Activated T-helper 2 cell treated with anti-CD3 and anti-CD28 coated beads, Interferon-gamma antibody, Interleukin-2, Interleukin-4, amounts not matched to agents 10 μg/mL and 5 μg/mL and 100 μg/mL, durations not matched to agents 14 hours and 24 hours and 36 hours (primary cell): ENCODE measurements at regions of chr5 and their contacts with region 1.

Region 1: GRCh38 chr5:134648425-134649162 is at the start of gene SEC24A:
- DNase-seq: peak; percentile 88
- H3K4me3 Mint-ChIP-seq: peak within 1 kb of the TSS; percentile 88
- H3K27ac Mint-ChIP-seq: peak within 1 kb of the TSS; percentile 97
- H3K4me1 Mint-ChIP-seq: peaks cover 22% of the 10 kb centered on the region
- H3K27me3 Mint-ChIP-seq: no peaks in the 10 kb centered on the region
- total RNA-seq, gene SEC24A: 33.9 and 34.0 TPM in 2 replicates

Region 2: GRCh38 chr5:134004592-134005375 is 643.8 kb before region 1 on chr5 and contains the start of gene VDAC1:
- intact Hi-C with region 1: loop called (anchors 10 kb)
- DNase-seq: peak; percentile 81
- H3K4me3 Mint-ChIP-seq: peak within 1 kb of the TSS; percentile 92
- H3K27ac Mint-ChIP-seq: peak within 1 kb of the TSS; percentile 97
- H3K4me1 Mint-ChIP-seq: peaks cover 40% of the 10 kb centered on the region
- H3K27me3 Mint-ChIP-seq: no peaks in the 10 kb centered on the region
- total RNA-seq, gene VDAC1: 455 and 459 TPM in 2 replicates

Region 3: GRCh38 chr5:134603059-134603458 is 45.5 kb before region 1 on chr5:
- intact Hi-C with region 1: loop called (anchors 1 kb)
- DNase-seq: no peak
- H3K4me3 Mint-ChIP-seq: no peak overlapping the region
- H3K27ac Mint-ChIP-seq: peak overlapping the region; percentile 52
- H3K4me1 Mint-ChIP-seq: peaks cover 40% of the 10 kb centered on the region
- H3K27me3 Mint-ChIP-seq: no peaks in the 10 kb centered on the region

Region 4: DNA sequence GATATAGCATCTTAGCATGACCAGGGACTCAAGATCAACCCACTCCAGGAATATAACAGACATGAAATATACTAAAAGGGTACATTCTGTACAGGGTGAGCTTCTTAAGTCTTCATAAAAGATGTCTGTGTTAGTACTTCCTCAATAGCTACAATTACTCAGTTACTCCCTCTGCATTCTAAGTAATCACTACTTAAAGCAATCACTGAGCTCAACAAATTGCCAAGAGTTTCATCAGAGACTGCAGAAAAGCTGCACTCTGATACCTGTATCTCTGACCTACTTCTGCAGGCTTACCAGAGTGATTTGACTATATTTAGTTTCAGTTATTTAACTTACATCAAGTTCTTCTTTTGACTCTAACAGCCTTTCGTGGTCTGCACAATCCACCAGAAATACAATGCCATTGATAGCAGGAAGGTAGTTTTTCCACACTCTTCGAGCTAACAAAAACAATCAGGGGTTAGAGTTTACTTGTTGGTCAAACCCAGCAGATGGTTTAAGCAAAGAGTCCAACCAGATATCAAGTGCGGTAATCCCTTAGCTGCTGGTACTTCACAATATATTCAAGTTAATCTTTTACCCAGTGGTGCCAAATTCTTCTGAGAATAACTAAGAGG is 39.3 kb before region 1 on chr5:
- intact Hi-C with region 1: loop called (anchors 1 kb)
- DNase-seq: no peak
- H3K4me3 Mint-ChIP-seq: peak overlapping the region; percentile 22
- H3K27ac Mint-ChIP-seq: peak overlapping the region; percentile 84
- H3K4me1 Mint-ChIP-seq: peaks cover 45% of the 10 kb centered on the region
- H3K27me3 Mint-ChIP-seq: no peaks in the 10 kb centered on the region

Region 5: DNA sequence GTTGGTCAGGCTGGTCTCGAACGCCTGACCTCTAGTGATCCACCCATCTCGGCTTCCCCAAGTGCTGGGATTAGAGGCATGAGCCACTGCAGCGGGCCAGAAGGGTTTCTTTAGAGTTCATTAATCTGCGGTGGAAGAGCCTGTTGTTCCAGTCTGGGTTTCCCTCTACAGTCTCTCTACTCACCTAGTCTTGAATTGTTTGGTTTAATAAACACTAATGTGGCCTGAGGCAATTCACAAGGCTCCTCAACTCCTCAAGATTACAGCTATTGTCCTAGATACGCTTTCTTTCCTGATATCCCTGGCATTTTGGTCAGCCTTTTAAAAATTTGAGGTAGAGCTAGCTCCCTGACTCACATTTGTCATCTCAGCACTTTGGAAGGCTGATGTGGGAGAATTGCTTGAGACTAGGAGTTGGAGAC is 11.4 kb before region 1 on chr5:
- intact Hi-C with region 1: loop called (anchors 1 kb)
- DNase-seq: no peak
- H3K4me3 Mint-ChIP-seq: no peak overlapping the region
- H3K27ac Mint-ChIP-seq: no peak overlapping the region
- H3K4me1 Mint-ChIP-seq: peaks cover 9% of the 10 kb centered on the region
- H3K27me3 Mint-ChIP-seq: no peaks in the 10 kb centered on the region